ENCODE measurements at regions of chr5 and their contacts with region 1.

Region 1: GRCh38 chr5:91383027-91383955 is at the start of gene ARRDC3:
- DNase-seq: peak; percentile 97
- H3K4me3 ChIP-seq: peak within 1 kb of the TSS; percentile 83
- H3K27ac ChIP-seq: peak within 1 kb of the TSS; percentile 97
- H3K4me1 ChIP-seq: peaks cover 28% of the 10 kb centered on the region
- H3K27me3 ChIP-seq: no peaks in the 10 kb centered on the region
- CTCF ChIP-seq: no peak
- total RNA-seq, gene ARRDC3: 14.4 TPM

Region 2: DNA sequence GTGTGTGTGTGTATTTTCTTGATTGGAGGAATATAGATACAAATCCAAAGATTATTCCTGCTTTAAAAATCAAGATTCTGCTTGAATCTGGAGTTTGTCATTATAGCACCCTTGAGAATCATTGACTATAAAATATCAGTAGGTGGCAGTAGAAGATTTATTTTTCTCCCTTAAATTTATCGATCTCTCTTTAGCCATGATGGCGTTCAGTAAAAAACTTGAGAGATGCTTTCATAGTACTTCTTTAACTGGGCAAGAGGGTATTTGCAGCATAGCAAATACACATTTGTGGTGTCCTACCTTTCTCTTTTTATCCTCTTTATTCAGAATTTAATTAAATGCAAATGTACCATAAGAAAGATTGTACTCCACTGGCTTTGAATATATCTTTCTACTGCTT is 517.0 kb before region 1 on chr5:
- intact Hi-C with region 1: loop called (anchors 10 kb)
- DNase-seq: no peak
- H3K4me3 ChIP-seq: no peak overlapping the region
- H3K27ac ChIP-seq: no peak overlapping the region
- H3K4me1 ChIP-seq: peaks cover 11% of the 10 kb centered on the region
- H3K27me3 ChIP-seq: no peaks in the 10 kb centered on the region
- CTCF ChIP-seq: peak; percentile 66

Region 3: GRCh38 chr5:90932052-90932699 is 451.1 kb before region 1 on chr5:
- intact Hi-C with region 1: loop called (anchors 10 kb)
- DNase-seq: no peak
- H3K4me3 ChIP-seq: no peak overlapping the region
- H3K27ac ChIP-seq: no peak overlapping the region
- H3K4me1 ChIP-seq: peaks cover 10% of the 10 kb centered on the region
- H3K27me3 ChIP-seq: no peaks in the 10 kb centered on the region
- CTCF ChIP-seq: peak; percentile 85

Region 4: DNA sequence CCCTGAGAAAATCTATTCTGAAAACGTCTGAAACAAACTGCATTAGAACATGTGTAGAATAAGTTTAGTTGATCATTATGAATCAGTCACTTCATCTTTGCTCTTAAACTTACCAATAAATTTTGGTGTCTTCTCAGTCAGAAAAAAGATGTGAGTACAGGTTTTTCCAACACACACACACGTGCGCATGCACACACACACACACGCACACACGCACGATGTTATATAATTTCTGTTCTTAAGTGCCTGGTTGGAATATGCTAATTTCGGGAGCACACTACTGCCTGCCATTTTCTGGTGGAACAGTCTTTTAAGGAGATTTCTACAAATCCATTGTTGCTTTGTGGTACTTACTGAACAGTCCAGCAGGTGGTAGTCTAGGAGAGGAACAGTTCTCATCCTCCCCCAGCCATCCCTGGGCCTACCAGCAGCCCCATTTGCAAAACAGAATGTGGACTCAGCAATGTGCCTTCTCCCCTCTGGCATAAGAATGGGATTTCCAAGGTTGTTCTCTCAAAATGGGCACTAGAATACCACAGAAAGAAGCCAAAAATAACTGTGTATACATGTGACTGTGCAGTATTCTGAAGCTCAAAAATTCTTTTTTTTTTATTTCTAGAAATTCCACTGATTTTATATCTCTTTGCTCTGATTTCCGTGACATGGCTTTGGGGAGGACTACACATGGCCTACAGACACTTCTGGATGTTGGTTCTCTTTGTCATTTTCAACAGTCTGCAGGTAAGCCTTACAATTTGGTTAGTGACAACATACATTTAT is 281.5 kb before region 1 on chr5:
- intact Hi-C with region 1: loop called (anchors 2 kb)
- DNase-seq: peak; percentile 66
- H3K4me3 ChIP-seq: no peak overlapping the region
- H3K27ac ChIP-seq: peak overlapping the region; percentile 34
- H3K4me1 ChIP-seq: peaks cover 10% of the 10 kb centered on the region
- H3K27me3 ChIP-seq: no peaks in the 10 kb centered on the region
- CTCF ChIP-seq: peak; percentile 87

Region 5: GRCh38 chr5:91225848-91226686 is 157.2 kb before region 1 on chr5:
- intact Hi-C with region 1: loop called (anchors 5 kb)
- DNase-seq: no peak
- H3K4me3 ChIP-seq: no peak overlapping the region
- H3K27ac ChIP-seq: no peak overlapping the region
- H3K4me1 ChIP-seq: no peaks in the 10 kb centered on the region
- H3K27me3 ChIP-seq: no peaks in the 10 kb centered on the region
- CTCF ChIP-seq: peak; percentile 59

Region 6: DNA sequence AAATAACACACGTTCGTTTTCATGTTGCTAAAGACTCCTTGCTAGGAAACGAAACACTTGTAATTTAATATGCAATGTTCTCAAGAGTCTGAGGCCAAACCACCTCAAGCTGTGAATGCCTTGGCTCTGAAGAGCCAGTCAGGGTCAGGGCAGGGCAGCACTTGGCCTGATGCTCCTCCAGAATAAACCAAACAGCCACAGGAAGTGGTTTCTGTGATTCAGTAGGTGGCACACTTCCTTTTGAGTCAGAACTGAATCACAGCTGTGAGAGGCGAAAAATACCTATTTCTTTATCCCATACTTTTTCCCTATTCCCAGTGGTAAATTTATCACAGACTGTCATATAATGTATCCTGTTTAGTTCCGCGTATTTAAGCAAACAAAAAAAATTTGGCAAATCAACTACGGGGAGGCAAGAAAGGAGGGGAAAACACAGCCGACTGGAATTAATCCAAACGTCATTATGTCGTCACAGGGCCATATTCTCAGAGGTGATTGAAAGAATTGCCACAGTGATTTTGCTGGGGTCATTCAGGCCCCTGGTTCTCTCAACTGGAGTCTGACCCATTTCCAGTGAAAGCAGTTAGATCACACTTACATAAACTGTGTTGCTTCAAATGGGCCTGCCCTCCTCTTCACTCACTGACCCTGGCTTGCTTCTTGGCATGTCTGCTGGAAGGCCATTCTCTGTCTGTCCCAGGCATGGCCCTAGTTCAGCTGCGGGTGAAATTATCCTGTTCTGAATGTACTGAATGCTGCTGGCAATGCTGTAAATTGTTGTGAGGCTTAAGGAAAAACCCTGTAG is 71.4 kb before region 1 on chr5:
- intact Hi-C with region 1: loop called (anchors 10 kb)
- DNase-seq: peak; percentile 49
- H3K4me3 ChIP-seq: peak overlapping the region; percentile 28
- H3K27ac ChIP-seq: peak overlapping the region; percentile 87
- H3K4me1 ChIP-seq: peaks cover 47% of the 10 kb centered on the region
- H3K27me3 ChIP-seq: no peaks in the 10 kb centered on the region
- CTCF ChIP-seq: peak; percentile 19

Measured in left ventricle myocardium inferior (tissue), 1 donor.